Naive thymus-derived CD4-positive, alpha-beta T cell (primary cell): ENCODE measurements at regions of chr14 and their contacts with region 1.

Region 1: GRCh38 chr14:21868442-21869046 is 194.9 kb upstream of the OR4E1 start:
- DNase-seq: peak; percentile 33 to 79 (median 70)
- ATAC-seq: peak; percentile 97
- H3K4me3 ChIP-seq: peak overlapping the region; percentile 16
- H3K4me3 Mint-ChIP-seq: peak overlapping the region; percentile 18 to 85 (median 74)
- H3K27ac ChIP-seq: peak overlapping the region; percentile 25
- H3K27ac Mint-ChIP-seq: peak overlapping the region; percentile 8 to 88 (median 59)
- H3K4me1 ChIP-seq: peaks cover 4 to 8% of the 10 kb centered on the region in 2 donors
- H3K4me1 Mint-ChIP-seq: peaks cover 3 to 54% (median 25%) of the 10 kb centered on the region in 7 donors
- H3K27me3 ChIP-seq: peaks cover 0 to 3% of the 10 kb centered on the region in 2 donors
- H3K27me3 Mint-ChIP-seq: peaks cover 0 to 6% (median 0%) of the 10 kb centered on the region in 5 donors

Region 2: DNA sequence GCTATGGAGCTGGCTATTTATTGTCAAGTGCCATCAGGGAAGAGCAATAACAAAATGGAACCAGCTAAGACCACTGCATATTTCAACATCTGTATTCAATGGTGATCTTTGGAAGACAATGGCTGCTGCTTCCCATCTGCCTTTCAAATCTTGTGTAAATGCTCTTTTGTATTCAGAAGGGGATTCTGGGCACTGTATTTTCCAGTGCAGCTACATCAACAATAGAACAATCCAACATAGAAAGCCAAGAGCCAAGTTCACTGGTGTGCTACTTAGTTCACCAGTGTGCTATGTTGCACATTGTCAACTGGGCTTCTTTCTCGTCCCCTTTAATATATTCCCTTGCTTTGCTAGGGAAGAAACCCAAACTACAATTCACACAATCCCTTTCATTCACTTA is 66.1 kb before region 1 on chr14:
- CTCF ChIA-PET with region 1: no interaction called
- POLR2A ChIA-PET with region 1: no interaction called
- intact Hi-C with region 1: no loop called
- DNase-seq: no peak
- ATAC-seq: no peak
- H3K4me3 ChIP-seq: no peak overlapping the region
- H3K4me3 Mint-ChIP-seq: no peak overlapping the region
- H3K27ac ChIP-seq: no peak overlapping the region
- H3K27ac Mint-ChIP-seq: no peak overlapping the region
- H3K4me1 ChIP-seq: no peaks in the 10 kb centered on the region
- H3K4me1 Mint-ChIP-seq: no peaks in the 10 kb centered on the region
- H3K27me3 ChIP-seq: no peaks in the 10 kb centered on the region
- H3K27me3 Mint-ChIP-seq: peaks cover 0 to 32% (median 19%) of the 10 kb centered on the region in 5 donors

Region 3: GRCh38 chr14:21852061-21852664 is 16.4 kb before region 1 on chr14:
- CTCF ChIA-PET with region 1: interaction called, 20 read pairs
- POLR2A ChIA-PET with region 1: interaction called, 16 read pairs
- intact Hi-C with region 1: loop called in 1 of 2 experiments (anchors 2 kb)
- DNase-seq: peak; percentile 36 to 78 (median 66)
- ATAC-seq: peak; percentile 90
- H3K4me3 ChIP-seq: peak overlapping the region; percentile 45
- H3K4me3 Mint-ChIP-seq: peak overlapping the region; percentile 61 to 88 (median 81)
- H3K27ac ChIP-seq: peak overlapping the region; percentile 32
- H3K27ac Mint-ChIP-seq: peak overlapping the region; percentile 29 to 90 (median 80)
- H3K4me1 ChIP-seq: no peaks in the 10 kb centered on the region
- H3K4me1 Mint-ChIP-seq: peaks cover 4 to 17% (median 14%) of the 10 kb centered on the region in 7 donors
- H3K27me3 ChIP-seq: no peaks in the 10 kb centered on the region
- H3K27me3 Mint-ChIP-seq: peaks cover 0 to 28% (median 6%) of the 10 kb centered on the region in 5 donors

Region 4: GRCh38 chr14:21882226-21882625 is 13.7 kb after region 1 on chr14:
- CTCF ChIA-PET with region 1: interaction called, 8 read pairs
- POLR2A ChIA-PET with region 1: interaction called, 3 read pairs
- intact Hi-C with region 1: loop called (anchors 1 to 2 kb)
- DNase-seq: no peak
- ATAC-seq: no peak
- H3K4me3 ChIP-seq: no peak overlapping the region
- H3K4me3 Mint-ChIP-seq: no peak overlapping the region
- H3K27ac ChIP-seq: no peak overlapping the region
- H3K27ac Mint-ChIP-seq: no peak overlapping the region
- H3K4me1 ChIP-seq: peaks cover 0 to 2% of the 10 kb centered on the region in 2 donors
- H3K4me1 Mint-ChIP-seq: peaks cover 0 to 17% (median 10%) of the 10 kb centered on the region in 7 donors
- H3K27me3 ChIP-seq: no peaks in the 10 kb centered on the region
- H3K27me3 Mint-ChIP-seq: peaks cover 0 to 45% (median 0%) of the 10 kb centered on the region in 5 donors

Region 5: GRCh38 chr14:21902650-21903103 is 34.1 kb after region 1 on chr14:
- CTCF ChIA-PET with region 1: interaction called, 3 read pairs
- POLR2A ChIA-PET with region 1: no interaction called
- intact Hi-C with region 1: loop called in 1 of 2 experiments (anchors 1 kb)
- DNase-seq: peak in 5 of 9 donors; percentile 30 to 57 (median 41)
- ATAC-seq: peak; percentile 87
- H3K4me3 ChIP-seq: peak overlapping the region; percentile 17
- H3K4me3 Mint-ChIP-seq: peak overlapping the region; percentile 62 to 84 (median 72)
- H3K27ac ChIP-seq: peak overlapping the region; percentile 14
- H3K27ac Mint-ChIP-seq: peak overlapping the region; percentile 60 to 91 (median 86)
- H3K4me1 ChIP-seq: no peaks in the 10 kb centered on the region
- H3K4me1 Mint-ChIP-seq: peaks cover 10 to 39% (median 25%) of the 10 kb centered on the region in 7 donors
- H3K27me3 ChIP-seq: no peaks in the 10 kb centered on the region
- H3K27me3 Mint-ChIP-seq: peaks cover 0 to 13% (median 0%) of the 10 kb centered on the region in 5 donors

Region 6: GRCh38 chr14:21933681-21934080 is 65.1 kb after region 1 on chr14:
- CTCF ChIA-PET with region 1: interaction called, 3 read pairs
- POLR2A ChIA-PET with region 1: no interaction called
- intact Hi-C with region 1: loop called in 1 of 2 experiments (anchors 2 kb)
- DNase-seq: peak in 2 of 9 donors; percentile 26 to 38
- ATAC-seq: no peak
- H3K4me3 ChIP-seq: no peak overlapping the region
- H3K4me3 Mint-ChIP-seq: no peak overlapping the region
- H3K27ac ChIP-seq: no peak overlapping the region
- H3K27ac Mint-ChIP-seq: no peak overlapping the region
- H3K4me1 ChIP-seq: no peaks in the 10 kb centered on the region
- H3K4me1 Mint-ChIP-seq: peaks cover 2 to 30% (median 21%) of the 10 kb centered on the region in 7 donors
- H3K27me3 ChIP-seq: no peaks in the 10 kb centered on the region
- H3K27me3 Mint-ChIP-seq: peaks cover 0 to 20% (median 0%) of the 10 kb centered on the region in 5 donors

Region 7: DNA sequence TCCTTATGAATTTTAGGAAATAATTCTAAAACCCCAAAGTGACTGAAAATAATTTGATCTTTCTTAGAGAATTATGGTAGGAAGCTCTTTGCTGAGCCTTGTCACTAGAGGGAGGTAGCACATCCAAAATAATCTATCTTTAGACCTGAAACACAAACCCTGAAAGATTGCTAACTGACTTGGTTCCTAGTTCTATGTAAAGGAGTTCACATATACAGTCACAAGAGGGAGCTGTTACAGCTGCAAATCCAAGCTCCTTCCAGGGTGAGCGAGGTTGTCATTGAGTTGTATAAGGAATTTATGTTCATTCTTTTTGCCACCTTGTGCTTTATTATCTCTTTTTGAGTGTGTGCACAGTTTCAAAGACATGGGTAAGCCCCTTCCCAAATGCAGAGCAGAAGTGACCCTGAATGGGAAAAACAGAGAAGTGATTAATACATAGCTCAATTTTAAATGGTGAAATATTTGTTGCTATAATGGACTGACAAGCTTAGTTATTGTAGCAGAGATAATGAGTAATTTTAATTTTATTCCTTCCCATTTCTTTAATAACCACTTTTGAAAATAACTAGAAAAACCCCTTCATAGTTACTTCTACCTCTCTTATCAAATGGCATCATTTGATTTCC is 332.5 kb after region 1 on chr14:
- CTCF ChIA-PET with region 1: no interaction called
- POLR2A ChIA-PET with region 1: no interaction called
- intact Hi-C with region 1: no loop called
- DNase-seq: peak in 6 of 9 donors; percentile 18 to 56 (median 37)
- ATAC-seq: peak; percentile 84
- H3K4me3 ChIP-seq: no peak overlapping the region
- H3K4me3 Mint-ChIP-seq: peak overlapping the region in 3 of 10 donors; percentile 25 to 63 (median 33)
- H3K27ac ChIP-seq: no peak overlapping the region
- H3K27ac Mint-ChIP-seq: peak overlapping the region in 2 of 9 donors; percentile 54 to 75
- H3K4me1 ChIP-seq: no peaks in the 10 kb centered on the region
- H3K4me1 Mint-ChIP-seq: peaks cover 0 to 17% (median 8%) of the 10 kb centered on the region in 7 donors
- H3K27me3 ChIP-seq: no peaks in the 10 kb centered on the region
- H3K27me3 Mint-ChIP-seq: no peaks in the 10 kb centered on the region

Region 8: DNA sequence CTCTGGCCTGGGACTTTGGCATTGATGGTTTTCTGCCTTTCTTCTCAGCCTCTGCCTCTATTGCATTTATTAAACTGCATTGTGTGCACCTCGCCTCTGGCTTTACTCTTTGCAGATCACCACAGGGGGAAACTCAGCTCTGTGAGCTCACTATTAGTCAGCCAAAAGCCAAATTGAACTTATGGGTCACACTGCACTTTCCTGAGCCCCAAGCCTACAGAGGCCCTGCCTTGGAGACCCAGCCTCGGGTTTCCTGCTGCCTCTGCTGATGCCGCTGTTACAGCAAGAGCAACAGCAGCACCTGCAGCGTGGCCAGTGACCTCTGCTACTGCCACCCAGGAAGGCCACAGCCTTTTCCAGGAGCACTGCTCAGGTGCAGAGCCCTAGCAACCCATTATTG is 597.9 kb after region 1 on chr14:
- CTCF ChIA-PET with region 1: no interaction called
- POLR2A ChIA-PET with region 1: no interaction called
- intact Hi-C with region 1: no loop called
- DNase-seq: no peak
- ATAC-seq: no peak
- H3K4me3 ChIP-seq: no peak overlapping the region
- H3K4me3 Mint-ChIP-seq: no peak overlapping the region
- H3K27ac ChIP-seq: no peak overlapping the region
- H3K27ac Mint-ChIP-seq: no peak overlapping the region
- H3K4me1 ChIP-seq: no peaks in the 10 kb centered on the region
- H3K4me1 Mint-ChIP-seq: peaks cover 0 to 26% (median 0%) of the 10 kb centered on the region in 7 donors
- H3K27me3 ChIP-seq: no peaks in the 10 kb centered on the region
- H3K27me3 Mint-ChIP-seq: no peaks in the 10 kb centered on the region